Endothelial cell of umbilical vein (primary cell): ENCODE measurements at regions of chr15 and their contacts with region 1.

Region 1: DNA sequence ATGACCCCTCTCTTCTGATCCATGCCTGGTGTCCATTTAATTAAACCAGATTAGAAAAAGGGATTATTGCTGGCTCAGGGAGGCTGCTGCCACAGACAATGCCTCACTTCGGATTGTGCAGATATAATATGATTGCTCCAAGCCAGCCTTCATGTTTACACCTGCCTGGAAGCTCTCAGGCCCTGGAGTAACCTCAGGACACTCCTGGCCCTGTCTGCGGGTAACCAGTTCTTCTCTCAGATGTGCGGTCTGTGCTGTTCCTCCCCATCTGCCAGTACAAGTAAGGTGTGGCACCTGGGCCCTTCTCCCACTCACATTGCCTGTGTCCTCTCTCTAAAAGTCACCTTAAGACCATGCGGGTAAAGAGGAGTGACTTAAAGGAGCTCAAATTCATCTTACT is 8.8 kb upstream of the GOLGA8J start:
- DNase-seq: no peak
- H3K4me3 ChIP-seq: no peak overlapping the region
- H3K27ac ChIP-seq: no peak overlapping the region
- H3K4me1 ChIP-seq: no peaks in the 10 kb centered on the region
- H3K27me3 ChIP-seq: peaks cover 1 to 2% of the 10 kb centered on the region in 2 experiments
- CTCF ChIP-seq: no peak
- POLR2A ChIP-seq: no peak

Region 2: GRCh38 chr15:29668120-29668602 is 405.8 kb before region 1 on chr15:
- CTCF ChIA-PET with region 1: interaction called, 70 read pairs
- POLR2A ChIA-PET with region 1: no interaction called
- dilution Hi-C with region 1: no loop called
- intact Hi-C with region 1: loop called (anchors 5 kb)
- DNase-seq: peak; percentile 91
- H3K4me3 ChIP-seq: no peak overlapping the region
- H3K27ac ChIP-seq: no peak overlapping the region
- H3K4me1 ChIP-seq: no peaks in the 10 kb centered on the region
- H3K27me3 ChIP-seq: no peaks in the 10 kb centered on the region
- CTCF ChIP-seq: peak; percentile 85 to 97
- POLR2A ChIP-seq: no peak

Region 3: DNA sequence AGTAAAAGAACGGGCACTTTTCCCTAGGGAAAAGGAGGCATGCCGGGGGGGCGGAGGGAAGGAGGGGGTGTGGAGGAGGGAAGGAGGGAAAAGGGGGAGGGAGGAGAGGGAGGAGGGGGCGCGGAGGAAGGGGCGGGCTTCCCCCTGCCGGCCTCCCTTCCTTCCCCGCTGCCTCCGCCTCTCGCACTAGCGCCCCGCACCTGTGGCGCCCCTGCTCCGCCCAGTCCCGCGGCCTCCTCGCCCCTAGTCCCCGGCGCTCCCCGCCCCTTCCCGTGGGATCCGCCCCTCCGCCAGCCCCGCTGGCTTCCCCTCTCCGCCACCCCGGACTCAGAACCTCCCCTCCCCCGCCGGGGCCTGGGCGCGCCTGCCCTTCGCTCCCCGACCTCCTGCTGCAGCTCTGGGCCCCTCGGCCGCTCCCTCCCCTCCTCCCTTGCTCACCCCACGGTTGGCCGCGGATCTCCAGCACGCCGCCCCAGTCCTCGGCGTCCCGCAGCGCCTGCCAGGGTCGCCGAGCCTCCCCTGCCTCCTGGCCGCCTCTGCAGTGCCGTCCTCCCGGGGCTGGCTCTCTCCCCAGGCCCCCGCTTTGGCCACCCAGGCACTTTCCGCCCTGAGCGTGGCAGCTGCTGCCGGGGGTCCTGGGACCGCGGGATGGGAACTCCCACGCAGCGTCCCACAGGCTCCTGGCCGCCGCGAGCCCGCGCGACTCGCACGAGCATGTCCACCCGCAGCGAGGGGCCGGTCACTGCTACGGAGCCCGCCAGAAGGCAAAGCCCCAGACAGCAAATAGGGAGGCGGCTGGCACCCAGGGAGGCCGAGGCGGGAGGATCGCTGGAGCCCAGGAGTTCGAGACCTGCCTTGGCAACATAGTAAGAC is 399.0 kb before region 1 on chr15:
- CTCF ChIA-PET with region 1: interaction called, 70 read pairs
- POLR2A ChIA-PET with region 1: interaction called, 3 read pairs
- dilution Hi-C with region 1: no loop called
- intact Hi-C with region 1: loop called (anchors 5 kb)
- DNase-seq: peak; percentile 45
- H3K4me3 ChIP-seq: peak overlapping the region; percentile 49 to 78 (median 62)
- H3K27ac ChIP-seq: peak overlapping the region; percentile 17
- H3K4me1 ChIP-seq: peaks cover 13% of the 10 kb centered on the region
- H3K27me3 ChIP-seq: no peaks in the 10 kb centered on the region
- CTCF ChIP-seq: no peak
- POLR2A ChIP-seq: no peak

Region 4: GRCh38 chr15:29740692-29741311 is 333.1 kb before region 1 on chr15:
- CTCF ChIA-PET with region 1: interaction called, 3 read pairs
- POLR2A ChIA-PET with region 1: no interaction called
- dilution Hi-C with region 1: no loop called
- intact Hi-C with region 1: loop called (anchors 5 kb)
- DNase-seq: no peak
- H3K4me3 ChIP-seq: no peak overlapping the region
- H3K27ac ChIP-seq: no peak overlapping the region
- H3K4me1 ChIP-seq: peaks cover 14% of the 10 kb centered on the region
- H3K27me3 ChIP-seq: no peaks in the 10 kb centered on the region
- CTCF ChIP-seq: peak; percentile 12
- POLR2A ChIP-seq: no peak

Region 5: DNA sequence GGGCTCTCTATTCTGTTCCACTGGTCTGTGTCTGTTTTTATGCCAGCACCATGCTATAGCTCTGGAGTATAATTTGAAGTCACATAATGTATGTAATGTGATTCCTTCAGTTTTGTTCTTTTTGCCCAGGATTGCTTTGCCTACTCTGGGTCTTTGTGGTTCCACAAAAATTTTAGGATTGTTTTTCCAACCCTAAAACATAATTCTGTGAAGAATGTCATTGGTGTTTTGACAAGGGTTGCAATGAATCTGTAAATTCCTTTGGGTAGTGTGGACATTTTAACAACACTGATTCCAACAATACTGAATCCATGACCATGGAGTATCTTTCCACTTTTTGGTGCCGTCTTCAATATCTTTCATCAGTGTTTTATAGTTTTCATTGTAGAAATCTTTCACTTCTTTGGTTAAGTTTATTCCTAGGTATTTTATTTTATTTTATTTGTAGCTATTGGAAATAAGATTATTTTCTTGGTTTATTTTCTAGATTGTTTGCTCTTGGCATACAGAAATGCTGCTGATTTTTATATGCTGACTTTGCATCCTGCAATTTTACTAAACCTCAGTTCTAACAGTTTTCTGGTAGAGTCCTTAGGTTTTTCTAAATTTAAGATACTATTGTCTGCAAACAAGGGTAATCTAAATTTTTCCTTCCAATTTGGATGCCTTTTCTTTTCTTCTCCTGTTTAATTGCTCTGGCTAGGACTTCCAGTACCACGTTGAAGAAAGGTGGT is 281.3 kb before region 1 on chr15:
- CTCF ChIA-PET with region 1: no interaction called
- POLR2A ChIA-PET with region 1: no interaction called
- dilution Hi-C with region 1: no loop called
- intact Hi-C with region 1: no loop called
- DNase-seq: no peak
- H3K4me3 ChIP-seq: no peak overlapping the region
- H3K27ac ChIP-seq: no peak overlapping the region
- H3K4me1 ChIP-seq: no peaks in the 10 kb centered on the region
- H3K27me3 ChIP-seq: no peaks in the 10 kb centered on the region
- CTCF ChIP-seq: no peak
- POLR2A ChIP-seq: no peak

Region 6: DNA sequence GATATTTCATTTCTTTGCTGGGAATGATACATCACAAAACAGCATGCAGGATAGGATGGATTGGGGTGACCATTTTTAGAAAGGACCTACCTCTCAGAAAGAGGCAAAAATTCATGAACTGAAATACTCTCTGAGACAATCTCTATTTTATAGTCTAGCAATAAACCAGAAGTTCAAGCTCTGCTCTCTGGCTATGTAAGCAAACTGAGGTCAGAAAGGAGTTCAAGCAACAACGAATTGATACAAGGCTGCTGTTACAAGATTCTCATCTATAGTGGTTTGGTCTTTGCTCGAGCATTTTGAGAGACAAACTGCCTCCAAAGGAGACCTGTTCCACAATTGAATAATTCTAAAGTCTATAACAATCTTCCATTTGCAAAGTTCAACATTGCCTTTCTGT is 75.9 kb before region 1 on chr15:
- CTCF ChIA-PET with region 1: no interaction called
- POLR2A ChIA-PET with region 1: no interaction called
- dilution Hi-C with region 1: no loop called
- intact Hi-C with region 1: no loop called
- DNase-seq: no peak
- H3K4me3 ChIP-seq: no peak overlapping the region
- H3K27ac ChIP-seq: no peak overlapping the region
- H3K4me1 ChIP-seq: no peaks in the 10 kb centered on the region
- H3K27me3 ChIP-seq: peaks cover 0 to 2% of the 10 kb centered on the region in 2 experiments
- CTCF ChIP-seq: no peak
- POLR2A ChIP-seq: no peak